Heart right ventricle (tissue), 16 donors: ENCODE measurements at regions of chr3 and their contacts with region 1.

Region 1: GRCh38 chr3:135887220-135887619 is 78.3 kb upstream of the PPP2R3A start:
- DNase-seq: no peak
- ATAC-seq: no peak
- H3K4me3 ChIP-seq: no peak overlapping the region
- H3K27ac ChIP-seq: no peak overlapping the region
- H3K4me1 ChIP-seq: no peaks in the 10 kb centered on the region
- H3K27me3 ChIP-seq: no peaks in the 10 kb centered on the region
- CTCF ChIP-seq: no peak

Region 2: DNA sequence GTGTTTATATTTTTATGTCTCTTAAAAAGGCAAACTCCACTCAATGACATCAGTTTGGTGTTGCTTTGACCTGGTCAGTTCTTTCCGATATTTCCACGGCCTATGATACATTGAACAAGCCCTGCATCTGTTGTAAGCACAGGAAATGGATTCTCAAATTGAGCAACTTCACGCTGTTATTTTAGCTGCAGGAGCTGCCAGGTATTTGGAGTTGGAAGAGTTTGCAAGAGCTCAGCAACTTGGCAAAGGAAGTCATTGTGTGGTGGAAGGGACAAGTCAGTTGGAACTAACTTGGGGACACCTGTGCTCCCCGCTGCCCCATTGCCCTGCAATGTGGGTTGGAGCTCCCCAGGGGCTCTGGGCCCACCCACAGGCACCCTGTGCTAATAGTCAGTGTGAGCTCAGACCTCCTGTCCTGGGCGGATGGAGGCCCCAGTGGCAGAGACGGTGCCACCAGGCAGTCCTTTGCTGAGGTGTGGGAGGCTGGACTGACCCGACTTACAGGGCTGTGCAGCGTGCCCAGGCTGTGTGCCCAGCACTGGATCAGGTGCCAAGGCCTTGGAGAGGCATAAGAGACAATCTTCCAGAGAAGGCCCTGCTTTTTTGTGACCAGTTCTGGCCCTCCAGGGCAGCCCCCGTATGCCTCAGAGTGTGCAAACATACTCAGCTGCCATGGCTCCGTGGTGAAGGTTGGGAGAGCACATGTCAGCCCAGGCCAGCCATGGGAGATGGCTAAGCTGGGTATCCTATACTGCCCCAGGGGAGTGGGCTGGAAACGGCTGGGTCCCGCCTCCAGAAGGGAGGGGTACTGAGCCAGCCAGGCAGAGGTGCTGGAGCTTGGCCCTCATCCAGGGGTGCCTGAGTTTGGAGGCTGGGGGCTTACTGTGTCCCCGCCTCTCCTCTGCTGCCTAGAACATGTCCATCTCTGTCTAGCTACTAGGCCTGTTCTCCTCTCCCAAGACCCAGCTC is 1279.9 kb before region 1 on chr3:
- intact Hi-C with region 1: loop called in 4 of 10 experiments (anchors 5 to 10 kb)
- DNase-seq: no peak
- ATAC-seq: no peak
- H3K4me3 ChIP-seq: no peak overlapping the region
- H3K27ac ChIP-seq: peak overlapping the region in 1 of 10 donors; percentile 64
- H3K4me1 ChIP-seq: peaks cover 0 to 20% (median 6%) of the 10 kb centered on the region in 9 donors
- H3K27me3 ChIP-seq: no peaks in the 10 kb centered on the region
- CTCF ChIP-seq: no peak

Region 3: GRCh38 chr3:135503760-135504686 is 383.2 kb before region 1 on chr3:
- intact Hi-C with region 1: loop called in 1 of 10 experiments (anchors 5 kb)
- DNase-seq: peak; percentile 47 to 63
- ATAC-seq: peak; percentile 46 to 85 (median 70)
- H3K4me3 ChIP-seq: no peak overlapping the region
- H3K27ac ChIP-seq: no peak overlapping the region
- H3K4me1 ChIP-seq: peaks cover 0 to 4% (median 0%) of the 10 kb centered on the region in 9 donors
- H3K27me3 ChIP-seq: peaks cover 0 to 53% (median 31%) of the 10 kb centered on the region in 7 donors
- CTCF ChIP-seq: peak; percentile 40 to 74 (median 64)

Region 4: GRCh38 chr3:135803028-135803692 is 84.1 kb before region 1 on chr3:
- intact Hi-C with region 1: no loop called
- DNase-seq: no peak
- ATAC-seq: no peak
- H3K4me3 ChIP-seq: no peak overlapping the region
- H3K27ac ChIP-seq: no peak overlapping the region
- H3K4me1 ChIP-seq: no peaks in the 10 kb centered on the region
- H3K27me3 ChIP-seq: peaks cover 0 to 24% (median 10%) of the 10 kb centered on the region in 7 donors
- CTCF ChIP-seq: no peak

Region 5: DNA sequence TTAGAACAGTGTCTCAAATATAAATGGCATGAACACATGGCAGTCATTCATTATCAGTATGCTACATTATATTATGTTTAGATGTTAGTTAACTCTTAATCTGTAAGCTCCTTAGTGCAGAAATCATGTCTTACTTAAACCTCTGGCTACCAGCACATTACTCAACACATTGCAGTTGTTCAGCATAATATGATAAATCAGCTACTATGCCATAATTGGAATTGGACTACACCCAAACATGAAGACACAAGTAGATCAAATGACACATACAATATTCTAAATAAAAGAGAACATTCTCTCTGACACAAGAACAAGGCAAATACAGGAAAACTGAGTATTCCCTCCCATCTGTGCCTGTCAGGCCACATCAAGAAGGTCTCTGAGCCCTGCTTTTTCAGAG is 479.1 kb after region 1 on chr3:
- intact Hi-C with region 1: no loop called
- DNase-seq: no peak
- ATAC-seq: no peak
- H3K4me3 ChIP-seq: no peak overlapping the region
- H3K27ac ChIP-seq: no peak overlapping the region
- H3K4me1 ChIP-seq: no peaks in the 10 kb centered on the region
- H3K27me3 ChIP-seq: no peaks in the 10 kb centered on the region
- CTCF ChIP-seq: no peak